Ascending aorta (tissue), 2 donors: ENCODE measurements at regions of chr7 and their contacts with region 1.

Region 1: GRCh38 chr7:137943147-137943551 is 58.7 kb downstream of the CREB3L2 start:
- DNase-seq: peak in 1 of 2 donors; percentile 83
- H3K4me3 ChIP-seq: no peak overlapping the region
- H3K27ac ChIP-seq: peak overlapping the region; percentile 77 to 86
- H3K4me1 ChIP-seq: peaks cover 15 to 73% of the 10 kb centered on the region in 2 donors
- H3K27me3 ChIP-seq: no peaks in the 10 kb centered on the region
- CTCF ChIP-seq: no peak

Region 2: GRCh38 chr7:137909037-137909436 is 34.1 kb before region 1 on chr7:
- intact Hi-C with region 1: loop called (anchors 5 kb)
- DNase-seq: peak in 1 of 2 donors; percentile 84
- H3K4me3 ChIP-seq: peak overlapping the region in 1 of 2 donors; percentile 11
- H3K27ac ChIP-seq: peak overlapping the region; percentile 78 to 87
- H3K4me1 ChIP-seq: peaks cover 0 to 20% of the 10 kb centered on the region in 2 donors
- H3K27me3 ChIP-seq: no peaks in the 10 kb centered on the region
- CTCF ChIP-seq: peak in 2 of 3 experiments; percentile 18 to 37

Region 3: DNA sequence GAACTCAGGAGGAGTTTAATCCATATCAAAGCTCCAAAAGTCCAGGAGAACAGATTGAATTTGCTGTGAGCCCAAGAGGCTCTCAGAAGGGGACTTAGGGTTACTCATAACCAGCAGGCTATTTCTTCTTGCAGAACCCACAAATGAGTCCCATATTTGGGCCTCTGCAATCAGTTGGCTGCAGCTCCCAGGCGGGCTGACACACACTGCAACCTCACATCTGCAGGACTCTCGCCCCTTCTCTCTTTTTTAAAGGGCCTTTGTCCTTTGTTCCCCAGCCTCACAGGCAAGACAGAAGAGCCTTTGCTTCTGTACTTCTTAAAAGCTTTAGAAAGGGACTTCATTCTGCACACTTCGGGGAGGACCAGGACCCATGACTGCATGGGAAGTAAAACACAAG is 32.1 kb after region 1 on chr7:
- intact Hi-C with region 1: loop called (anchors 5 kb)
- DNase-seq: peak in 1 of 2 donors; percentile 79
- H3K4me3 ChIP-seq: peak overlapping the region in 1 of 2 donors; percentile 37
- H3K27ac ChIP-seq: peak overlapping the region; percentile 83 to 91
- H3K4me1 ChIP-seq: peaks cover 30 to 83% of the 10 kb centered on the region in 2 donors
- H3K27me3 ChIP-seq: no peaks in the 10 kb centered on the region
- CTCF ChIP-seq: no peak